Posterior vena cava (tissue), 2 donors: ENCODE measurements at regions of chr13 and their contacts with region 1.

Region 1: GRCh38 chr13:44801990-44802389 is 187.3 kb downstream of the NUFIP1 start:
- DNase-seq: no peak

Region 2: DNA sequence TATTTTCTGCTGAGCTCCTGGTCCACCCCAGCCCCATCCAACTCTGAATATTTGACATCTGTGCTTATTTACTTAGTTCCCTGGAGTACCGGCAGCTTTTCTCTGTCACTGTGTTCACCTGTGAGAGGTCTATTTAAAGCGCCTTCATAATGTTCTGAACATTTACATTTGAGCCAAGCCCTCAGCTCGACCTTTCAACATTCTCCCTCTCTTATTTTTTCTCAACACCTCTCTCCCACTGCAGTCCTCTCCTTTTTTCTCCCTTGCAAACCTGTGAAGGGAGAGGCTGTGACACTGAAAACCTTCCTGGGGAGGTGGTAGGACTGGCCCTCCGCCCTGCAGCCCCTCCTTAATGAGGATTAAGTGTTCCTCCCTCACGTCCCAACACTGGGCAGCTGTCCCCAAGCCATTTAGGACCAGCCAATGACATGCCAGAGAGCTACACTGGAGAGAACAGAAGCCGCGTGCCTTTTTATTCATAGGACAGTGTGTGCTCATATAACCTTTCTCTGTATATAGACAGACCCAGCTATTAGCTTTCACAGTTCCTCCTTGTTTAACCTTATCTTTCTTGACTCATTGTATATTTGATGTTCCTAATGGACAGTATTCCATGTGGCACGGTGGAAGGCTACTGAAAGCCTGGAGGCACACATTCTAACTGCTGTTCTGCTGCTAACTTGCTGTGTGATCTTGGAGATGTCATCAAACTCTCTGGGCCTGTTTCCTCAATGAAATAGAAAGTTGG is 52.5 kb after region 1 on chr13:
- intact Hi-C with region 1: loop called in 1 of 2 experiments (anchors 10 kb)
- DNase-seq: no peak